Activated T-helper 2 cell treated with anti-CD3 and anti-CD28 coated beads, Interferon-gamma antibody, Interleukin-2, Interleukin-4, amounts not matched to agents 10 μg/mL and 5 μg/mL and 100 μg/mL, durations not matched to agents 14 hours and 24 hours and 36 hours (primary cell): ENCODE measurements at regions of chr16 and their contacts with region 1.

Region 1: DNA sequence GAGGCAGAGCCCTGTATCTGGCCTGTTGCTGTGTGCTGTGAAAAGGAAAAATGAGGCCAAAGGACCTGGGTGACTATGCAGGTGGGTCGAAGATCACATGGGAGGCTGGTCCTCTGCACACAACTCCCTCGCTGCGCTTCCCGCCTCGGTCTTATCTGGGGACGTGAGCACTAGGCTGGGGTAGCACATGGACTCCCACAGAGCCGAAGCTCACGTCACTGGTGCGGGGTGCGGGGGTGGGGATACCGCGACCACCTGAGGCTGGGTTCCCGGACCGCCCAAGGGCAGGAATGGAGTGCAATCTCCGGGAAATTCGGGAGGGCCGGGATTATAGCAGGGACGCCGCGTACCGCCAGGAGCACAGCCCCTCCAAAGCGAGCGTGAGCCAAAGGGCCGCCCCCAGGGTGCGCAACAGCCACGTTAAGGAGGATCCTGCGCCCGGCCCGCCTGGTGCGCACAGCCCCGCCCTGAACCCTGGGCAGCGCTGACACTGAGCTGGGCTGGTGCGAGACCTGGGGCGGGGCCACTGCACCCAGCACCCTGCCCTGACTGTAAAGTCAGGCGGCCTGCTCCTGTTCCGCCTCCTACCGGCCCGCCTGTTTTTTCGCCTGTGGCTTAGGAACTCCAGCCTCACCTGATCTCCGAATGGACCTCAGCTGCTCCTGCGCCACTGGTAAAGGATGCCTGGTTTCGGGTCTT is 4.8 kb downstream of the MT1A start:
- DNase-seq: peak; percentile 76
- H3K4me3 Mint-ChIP-seq: peak overlapping the region; percentile 70
- H3K27ac Mint-ChIP-seq: peak overlapping the region; percentile 60
- H3K4me1 Mint-ChIP-seq: peaks cover 23% of the 10 kb centered on the region
- H3K27me3 Mint-ChIP-seq: peaks cover 48% of the 10 kb centered on the region

Region 2: DNA sequence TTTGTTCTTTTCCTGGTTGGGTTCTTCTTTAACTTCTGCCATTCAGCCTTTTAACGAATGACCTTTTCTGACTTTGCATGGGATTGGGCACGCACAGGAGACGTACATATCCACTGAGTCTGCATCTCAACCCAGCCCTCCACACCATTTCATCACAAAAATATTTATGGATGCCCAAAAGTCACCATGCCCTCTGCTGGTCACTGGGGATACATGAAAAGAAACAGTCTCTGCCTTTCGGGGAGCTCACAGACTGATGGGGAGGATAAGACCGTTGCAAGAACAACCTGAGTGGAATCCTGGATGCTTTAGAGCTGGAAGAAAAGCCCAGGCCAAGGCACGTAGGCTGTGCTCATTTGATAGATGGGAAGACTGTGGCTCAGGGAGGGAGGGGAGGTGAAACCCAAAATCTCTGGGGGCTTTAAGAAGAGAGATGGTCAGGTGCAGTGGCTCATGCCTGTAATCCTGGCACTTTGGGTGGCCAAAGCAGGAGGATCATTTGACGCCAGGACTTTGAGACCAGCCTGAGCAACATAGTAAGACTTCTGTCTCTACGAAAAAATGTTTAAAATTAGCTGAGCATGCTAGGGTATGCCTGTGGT is 42.7 kb before region 1 on chr16:
- intact Hi-C with region 1: loop called (anchors 2 kb)
- DNase-seq: no peak
- H3K4me3 Mint-ChIP-seq: no peak overlapping the region
- H3K27ac Mint-ChIP-seq: no peak overlapping the region
- H3K4me1 Mint-ChIP-seq: peaks cover 13% of the 10 kb centered on the region
- H3K27me3 Mint-ChIP-seq: peaks cover 26% of the 10 kb centered on the region

Region 3: GRCh38 chr16:56625140-56625942 is 17.9 kb before region 1 on chr16 and contains the start of gene MT1E:
- intact Hi-C with region 1: loop called (anchors 1 kb)
- DNase-seq: peak; percentile 67
- H3K4me3 Mint-ChIP-seq: peak within 1 kb of the TSS; percentile 94
- H3K27ac Mint-ChIP-seq: peak within 1 kb of the TSS; percentile 95
- H3K4me1 Mint-ChIP-seq: peaks cover 24% of the 10 kb centered on the region
- H3K27me3 Mint-ChIP-seq: peaks cover 5% of the 10 kb centered on the region
- total RNA-seq, gene MT1E: 181 and 184 TPM in 2 replicates

Region 4: GRCh38 chr16:56657555-56658326 is 14.5 kb after region 1 on chr16 and contains the start of gene MT1F:
- intact Hi-C with region 1: loop called (anchors 1 kb)
- DNase-seq: peak; percentile 47
- H3K4me3 Mint-ChIP-seq: peak within 1 kb of the TSS; percentile 96
- H3K27ac Mint-ChIP-seq: peak within 1 kb of the TSS; percentile 79
- H3K4me1 Mint-ChIP-seq: peaks cover 19% of the 10 kb centered on the region
- H3K27me3 Mint-ChIP-seq: peaks cover 22% of the 10 kb centered on the region
- total RNA-seq, gene MT1F: 6.4 and 8.0 TPM in 2 replicates

Region 5: GRCh38 chr16:56681939-56682702 is 38.9 kb after region 1 on chr16 and contains the start of gene MT1X:
- intact Hi-C with region 1: loop called (anchors 5 kb)
- DNase-seq: peak; percentile 83
- H3K4me3 Mint-ChIP-seq: peak within 1 kb of the TSS; percentile 94
- H3K27ac Mint-ChIP-seq: peak within 1 kb of the TSS; percentile 84
- H3K4me1 Mint-ChIP-seq: peaks cover 24% of the 10 kb centered on the region
- H3K27me3 Mint-ChIP-seq: no peaks in the 10 kb centered on the region
- total RNA-seq, gene MT1X: 58.2 and 62.3 TPM in 2 replicates